ENCODE measurements at regions of chr11 and their contacts with region 1.

Region 1: GRCh38 chr11:66659763-66660162 is 17.9 kb downstream of the RBM4B start:
- DNase-seq: no peak
- ATAC-seq: no peak
- H3K4me3 ChIP-seq: no peak overlapping the region
- H3K27ac ChIP-seq: no peak overlapping the region
- H3K4me1 ChIP-seq: no peaks in the 10 kb centered on the region
- H3K27me3 ChIP-seq: no peaks in the 10 kb centered on the region
- CTCF ChIP-seq: no peak

Region 2: GRCh38 chr11:66625041-66625751 is 34.6 kb before region 1 on chr11:
- CTCF ChIA-PET with region 1: no interaction called
- POLR2A ChIA-PET with region 1: no interaction called
- in situ Hi-C with region 1: no loop called
- intact Hi-C with region 1: no loop called
- DNase-seq: no peak
- ATAC-seq: no peak
- H3K4me3 ChIP-seq: no peak overlapping the region
- H3K27ac ChIP-seq: no peak overlapping the region
- H3K4me1 ChIP-seq: peaks cover 15% of the 10 kb centered on the region
- H3K27me3 ChIP-seq: no peaks in the 10 kb centered on the region
- CTCF ChIP-seq: no peak

Region 3: DNA sequence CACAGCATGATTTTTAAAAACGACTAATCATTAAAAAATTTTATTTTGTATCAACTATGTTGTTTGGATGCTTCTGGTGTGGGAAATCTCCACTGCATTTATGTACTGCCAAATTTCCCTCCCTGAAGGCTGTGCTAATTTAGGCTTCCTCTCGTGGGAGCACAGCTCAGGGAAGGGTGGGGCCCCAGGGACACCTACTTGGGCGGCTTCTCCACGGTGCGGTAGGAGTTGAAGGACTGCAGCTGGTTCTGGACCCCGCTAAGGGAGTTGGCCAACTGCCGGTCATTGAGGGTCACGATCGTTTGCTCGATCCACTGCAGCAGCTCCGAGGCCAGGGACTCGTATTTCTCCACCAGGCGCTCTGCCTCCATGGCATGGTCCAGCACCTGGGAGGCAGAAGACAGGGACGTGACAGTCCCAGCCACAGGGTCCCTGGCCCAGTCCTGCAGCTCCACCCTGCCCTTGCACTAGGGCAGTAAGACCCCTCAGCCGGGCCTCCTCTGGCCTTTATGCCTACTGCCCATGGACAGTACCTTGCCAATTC is 50.7 kb after region 1 on chr11:
- CTCF ChIA-PET with region 1: interaction called, 10 read pairs
- POLR2A ChIA-PET with region 1: no interaction called
- in situ Hi-C with region 1: no loop called
- intact Hi-C with region 1: no loop called
- DNase-seq: no peak
- ATAC-seq: no peak
- H3K4me3 ChIP-seq: no peak overlapping the region
- H3K27ac ChIP-seq: no peak overlapping the region
- H3K4me1 ChIP-seq: no peaks in the 10 kb centered on the region
- H3K27me3 ChIP-seq: no peaks in the 10 kb centered on the region
- CTCF ChIP-seq: no peak

Measured in Panc1 (cell line).